ENCODE measurements at regions of chr11 and their contacts with region 1.

Region 1: DNA sequence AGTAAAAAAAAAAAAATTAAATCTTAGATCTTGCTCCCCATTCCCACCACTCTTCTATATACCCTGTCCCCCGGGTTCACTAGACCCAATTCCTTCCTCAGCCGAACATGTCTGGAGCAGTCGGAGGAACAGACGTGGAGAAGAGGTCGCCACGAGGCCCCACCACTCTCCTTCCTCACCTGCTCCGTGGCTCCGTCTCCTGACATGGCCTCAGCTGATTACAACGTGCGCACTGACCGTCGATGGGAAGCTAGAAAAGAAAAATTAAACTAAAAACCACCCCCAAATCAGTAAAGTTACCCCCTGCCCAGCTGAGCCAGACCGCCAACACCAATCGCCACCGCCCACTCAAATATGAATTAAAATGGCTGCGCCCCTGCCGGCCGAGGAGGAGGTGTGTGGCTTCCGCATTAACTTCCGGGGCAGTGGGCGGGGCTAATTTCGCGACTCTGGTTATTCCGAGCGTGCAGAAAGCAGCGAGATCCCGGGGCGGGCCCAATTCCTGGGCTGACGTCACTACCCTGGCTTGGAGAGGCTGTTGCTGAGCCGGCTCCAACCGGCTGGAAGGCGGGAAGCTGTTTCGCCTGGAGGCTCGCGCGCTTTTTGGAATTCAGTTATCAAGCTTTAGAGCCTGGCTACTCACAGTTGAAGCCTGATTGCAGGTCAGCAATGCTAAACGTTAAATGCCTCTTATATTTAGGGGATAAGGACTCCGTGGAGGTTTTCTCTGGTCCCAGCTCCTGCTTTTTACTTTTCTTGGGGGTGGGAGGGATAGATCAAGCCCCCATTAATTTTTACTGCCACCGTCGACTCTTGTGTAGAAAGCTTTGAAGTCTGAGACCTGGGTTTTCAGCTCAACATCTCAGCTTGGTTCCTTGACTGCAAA is at the start of gene CSTF3:
- DNase-seq: peak; percentile 84 to 95 (median 89)
- ATAC-seq: peak; percentile 98
- H3K4me3 ChIP-seq: peak within 1 kb of the TSS; percentile 97
- H3K4me3 Mint-ChIP-seq: peak within 1 kb of the TSS; percentile 95 to 100 (median 100)
- H3K27ac ChIP-seq: peak within 1 kb of the TSS; percentile 84
- H3K27ac Mint-ChIP-seq: peak within 1 kb of the TSS; percentile 95 to 100 (median 99)
- H3K4me1 ChIP-seq: peaks cover 11 to 19% of the 10 kb centered on the region in 2 donors
- H3K4me1 Mint-ChIP-seq: peaks cover 40 to 64% (median 55%) of the 10 kb centered on the region in 7 donors
- H3K27me3 ChIP-seq: no peaks in the 10 kb centered on the region
- H3K27me3 Mint-ChIP-seq: no peaks in the 10 kb centered on the region
- total RNA-seq, gene CSTF3: 14.6 to 38.6 (median 28.7) TPM

Region 2: DNA sequence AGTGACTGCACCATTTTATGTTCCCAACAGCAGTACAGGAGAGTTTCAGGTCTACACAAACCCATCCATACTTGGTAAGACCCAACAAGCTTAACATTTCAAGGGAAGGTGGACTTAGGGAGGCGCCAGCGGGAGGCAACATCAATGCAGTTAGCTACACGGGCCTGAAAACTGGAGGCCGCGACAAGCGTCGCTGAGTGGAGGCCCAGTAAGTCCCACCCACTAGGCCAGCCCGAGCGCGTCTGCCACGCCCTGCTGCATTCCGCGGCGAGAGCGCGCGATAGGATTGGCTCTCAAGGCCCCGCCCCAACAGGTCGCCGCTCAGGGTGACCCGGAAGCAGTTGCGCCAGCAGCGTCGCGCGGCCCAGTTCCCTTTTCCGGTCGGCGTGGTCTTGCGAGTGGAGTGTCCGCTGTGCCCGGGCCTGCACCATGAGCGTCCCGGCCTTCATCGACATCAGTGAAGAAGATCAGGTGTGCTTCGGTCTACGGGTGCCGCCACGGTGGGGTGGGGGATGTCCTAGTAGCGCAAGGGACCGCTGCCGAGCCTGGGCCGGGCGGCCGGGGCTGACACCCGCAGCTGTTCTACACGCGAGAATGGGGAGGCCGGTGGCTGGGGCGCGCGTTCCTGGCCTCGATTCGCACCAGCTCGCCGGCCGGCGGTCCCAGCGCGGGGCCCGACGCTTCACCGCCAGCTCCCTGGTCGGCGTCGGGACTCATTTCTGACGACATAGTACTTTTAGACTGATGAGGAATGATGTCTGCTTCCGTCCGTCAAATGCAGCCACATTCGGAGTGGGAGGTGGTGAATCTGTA is 577.7 kb before region 1 on chr11 and contains the start of gene EIF3M:
- CTCF ChIA-PET with region 1: no interaction called
- POLR2A ChIA-PET with region 1: interaction called, 5 read pairs
- intact Hi-C with region 1: loop called (anchors 1 kb)
- DNase-seq: peak; percentile 90 to 95 (median 94)
- ATAC-seq: peak; percentile 100
- H3K4me3 ChIP-seq: peak within 1 kb of the TSS; percentile 87
- H3K4me3 Mint-ChIP-seq: peak within 1 kb of the TSS; percentile 93 to 99 (median 97)
- H3K27ac ChIP-seq: peak within 1 kb of the TSS; percentile 96
- H3K27ac Mint-ChIP-seq: peak within 1 kb of the TSS; percentile 94 to 99 (median 97)
- H3K4me1 ChIP-seq: peaks cover 27 to 28% of the 10 kb centered on the region in 2 donors
- H3K4me1 Mint-ChIP-seq: peaks cover 25 to 52% (median 44%) of the 10 kb centered on the region in 7 donors
- H3K27me3 ChIP-seq: no peaks in the 10 kb centered on the region
- H3K27me3 Mint-ChIP-seq: no peaks in the 10 kb centered on the region
- total RNA-seq, gene EIF3M: 210 to 250 (median 236) TPM

Region 3: GRCh38 chr11:33015621-33016551 is 145.5 kb before region 1 on chr11 and contains the start of gene DEPDC7:
- CTCF ChIA-PET with region 1: interaction called, 4 read pairs
- POLR2A ChIA-PET with region 1: no interaction called
- intact Hi-C with region 1: loop called (anchors 2 to 5 kb)
- DNase-seq: peak; percentile 72 to 84 (median 81)
- ATAC-seq: peak; percentile 90
- H3K4me3 ChIP-seq: peak within 1 kb of the TSS; percentile 65
- H3K4me3 Mint-ChIP-seq: peak within 1 kb of the TSS; percentile 86 to 93 (median 90)
- H3K27ac ChIP-seq: peak within 1 kb of the TSS; percentile 50
- H3K27ac Mint-ChIP-seq: peak within 1 kb of the TSS in 6 of 9 donors; percentile 63 to 77 (median 69)
- H3K4me1 ChIP-seq: peaks cover 14 to 23% of the 10 kb centered on the region in 2 donors
- H3K4me1 Mint-ChIP-seq: peaks cover 14 to 73% (median 58%) of the 10 kb centered on the region in 7 donors
- H3K27me3 ChIP-seq: peaks cover 0 to 7% of the 10 kb centered on the region in 2 donors
- H3K27me3 Mint-ChIP-seq: peaks cover 0 to 74% (median 5%) of the 10 kb centered on the region in 5 donors
- total RNA-seq, gene DEPDC7: 0.65 to 9.6 (median 2.1) TPM

Region 4: GRCh38 chr11:33227578-33228262 is 66.4 kb after region 1 on chr11:
- CTCF ChIA-PET with region 1: no interaction called
- POLR2A ChIA-PET with region 1: no interaction called
- intact Hi-C with region 1: no loop called
- DNase-seq: no peak
- ATAC-seq: no peak
- H3K4me3 ChIP-seq: no peak overlapping the region
- H3K4me3 Mint-ChIP-seq: no peak overlapping the region
- H3K27ac ChIP-seq: no peak overlapping the region
- H3K27ac Mint-ChIP-seq: no peak overlapping the region
- H3K4me1 ChIP-seq: no peaks in the 10 kb centered on the region
- H3K4me1 Mint-ChIP-seq: peaks cover 0 to 5% (median 0%) of the 10 kb centered on the region in 7 donors
- H3K27me3 ChIP-seq: no peaks in the 10 kb centered on the region
- H3K27me3 Mint-ChIP-seq: no peaks in the 10 kb centered on the region

Region 5: GRCh38 chr11:33329705-33330329 is 168.5 kb after region 1 on chr11:
- CTCF ChIA-PET with region 1: interaction called, 17 read pairs
- POLR2A ChIA-PET with region 1: interaction called, 4 read pairs
- intact Hi-C with region 1: loop called (anchors 1 kb)
- DNase-seq: peak in 7 of 9 donors; percentile 20 to 59 (median 49)
- ATAC-seq: peak; percentile 82
- H3K4me3 ChIP-seq: no peak overlapping the region
- H3K4me3 Mint-ChIP-seq: no peak overlapping the region
- H3K27ac ChIP-seq: no peak overlapping the region
- H3K27ac Mint-ChIP-seq: peak overlapping the region in 2 of 9 donors; percentile 54 to 80
- H3K4me1 ChIP-seq: no peaks in the 10 kb centered on the region
- H3K4me1 Mint-ChIP-seq: peaks cover 2 to 45% (median 28%) of the 10 kb centered on the region in 7 donors
- H3K27me3 ChIP-seq: no peaks in the 10 kb centered on the region
- H3K27me3 Mint-ChIP-seq: no peaks in the 10 kb centered on the region

Region 6: GRCh38 chr11:33736148-33736809 is 574.9 kb after region 1 on chr11 and contains the start of gene CD59:
- CTCF ChIA-PET with region 1: interaction called, 3 read pairs
- POLR2A ChIA-PET with region 1: interaction called, 4 read pairs
- intact Hi-C with region 1: loop called (anchors 1 to 2 kb)
- DNase-seq: peak; percentile 75 to 94 (median 85)
- ATAC-seq: peak; percentile 92
- H3K4me3 ChIP-seq: peak within 1 kb of the TSS; percentile 76
- H3K4me3 Mint-ChIP-seq: peak within 1 kb of the TSS; percentile 87 to 97 (median 92)
- H3K27ac ChIP-seq: peak within 1 kb of the TSS; percentile 72
- H3K27ac Mint-ChIP-seq: peak within 1 kb of the TSS; percentile 79 to 94 (median 86)
- H3K4me1 ChIP-seq: peaks cover 9 to 17% of the 10 kb centered on the region in 2 donors
- H3K4me1 Mint-ChIP-seq: peaks cover 21 to 41% (median 36%) of the 10 kb centered on the region in 7 donors
- H3K27me3 ChIP-seq: no peaks in the 10 kb centered on the region
- H3K27me3 Mint-ChIP-seq: peaks cover 0 to 11% (median 0%) of the 10 kb centered on the region in 5 donors
- total RNA-seq, gene CD59: 23.3 to 152 (median 62.7) TPM

Region 7: GRCh38 chr11:34438529-34439507 is 1277.5 kb after region 1 on chr11 and contains the start of gene CAT:
- CTCF ChIA-PET with region 1: no interaction called
- POLR2A ChIA-PET with region 1: no interaction called
- intact Hi-C with region 1: loop called (anchors 1 kb)
- DNase-seq: peak; percentile 94 to 98 (median 97)
- ATAC-seq: peak; percentile 98
- H3K4me3 ChIP-seq: peak within 1 kb of the TSS; percentile 90
- H3K4me3 Mint-ChIP-seq: peak within 1 kb of the TSS; percentile 88 to 98 (median 96)
- H3K27ac ChIP-seq: peak within 1 kb of the TSS; percentile 79
- H3K27ac Mint-ChIP-seq: peak within 1 kb of the TSS; percentile 89 to 97 (median 93)
- H3K4me1 ChIP-seq: peaks cover 7 to 19% of the 10 kb centered on the region in 2 donors
- H3K4me1 Mint-ChIP-seq: peaks cover 21 to 47% (median 35%) of the 10 kb centered on the region in 7 donors
- H3K27me3 ChIP-seq: no peaks in the 10 kb centered on the region
- H3K27me3 Mint-ChIP-seq: no peaks in the 10 kb centered on the region
- total RNA-seq, gene CAT: 23.3 to 55.9 (median 42.6) TPM